Posterior cingulate gyrus (tissue), 11 donors: ENCODE measurements at regions of chr10 and their contacts with region 1.

Region 1: DNA sequence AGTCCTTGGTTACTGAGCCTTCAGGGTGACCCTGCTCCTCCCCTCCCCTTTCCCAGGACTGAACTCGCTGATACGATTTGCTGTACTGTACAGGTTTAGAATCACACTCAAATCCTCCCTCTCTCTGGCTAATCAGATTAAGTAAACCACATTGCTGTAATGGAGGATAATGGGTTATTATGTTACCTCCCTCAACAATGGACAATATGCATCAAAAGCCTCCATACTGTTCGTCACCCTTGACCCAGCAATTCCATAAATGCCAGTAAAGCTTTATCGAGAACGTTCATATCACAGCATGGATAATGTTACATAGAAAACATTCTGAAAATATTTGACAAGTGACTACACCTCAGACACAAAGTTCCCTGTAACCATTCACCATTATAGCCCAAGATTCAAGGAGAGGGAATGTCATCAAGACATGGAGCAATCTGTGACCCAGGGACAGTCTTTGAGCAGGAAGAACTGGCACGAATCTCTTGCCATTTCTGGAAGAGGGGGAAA is 61.7 kb downstream of the FAM107B start:
- DNase-seq: no peak

Region 2: DNA sequence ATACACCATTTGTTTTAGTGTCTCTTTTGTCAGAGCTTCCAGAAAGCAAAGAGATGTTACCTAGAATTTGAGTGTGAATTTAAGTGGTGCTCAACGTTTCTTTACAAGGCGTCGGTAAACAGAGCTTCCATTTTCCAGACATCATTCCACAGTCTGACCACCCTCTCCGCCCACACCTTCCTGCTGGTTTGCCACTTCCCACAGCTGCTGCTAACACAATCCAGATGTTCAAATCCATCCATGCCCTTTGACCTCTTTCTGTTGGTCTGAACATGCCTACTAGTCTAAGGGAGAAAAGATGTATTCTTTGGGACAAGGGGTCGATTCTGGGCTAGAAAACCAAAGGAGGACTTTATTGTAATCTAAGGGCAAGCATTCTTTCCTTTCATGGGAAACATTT is 24.4 kb before region 1 on chr10:
- intact Hi-C with region 1: no loop called
- DNase-seq: no peak

Region 3: GRCh38 chr10:14757401-14757800 is 44.4 kb after region 1 on chr10:
- intact Hi-C with region 1: loop called (anchors 2 kb)
- DNase-seq: no peak